Breast epithelium (tissue), 4 donors: ENCODE measurements at regions of chr7 and their contacts with region 1.

Region 1: GRCh38 chr7:84904561-84904960 is 282.3 kb downstream of the SEMA3D start:
- DNase-seq: no peak
- H3K4me3 ChIP-seq: no peak overlapping the region
- H3K27ac ChIP-seq: no peak overlapping the region
- H3K4me1 ChIP-seq: no peaks in the 10 kb centered on the region
- H3K27me3 ChIP-seq: no peaks in the 10 kb centered on the region
- CTCF ChIP-seq: no peak
- POLR2A ChIP-seq: no peak

Region 2: DNA sequence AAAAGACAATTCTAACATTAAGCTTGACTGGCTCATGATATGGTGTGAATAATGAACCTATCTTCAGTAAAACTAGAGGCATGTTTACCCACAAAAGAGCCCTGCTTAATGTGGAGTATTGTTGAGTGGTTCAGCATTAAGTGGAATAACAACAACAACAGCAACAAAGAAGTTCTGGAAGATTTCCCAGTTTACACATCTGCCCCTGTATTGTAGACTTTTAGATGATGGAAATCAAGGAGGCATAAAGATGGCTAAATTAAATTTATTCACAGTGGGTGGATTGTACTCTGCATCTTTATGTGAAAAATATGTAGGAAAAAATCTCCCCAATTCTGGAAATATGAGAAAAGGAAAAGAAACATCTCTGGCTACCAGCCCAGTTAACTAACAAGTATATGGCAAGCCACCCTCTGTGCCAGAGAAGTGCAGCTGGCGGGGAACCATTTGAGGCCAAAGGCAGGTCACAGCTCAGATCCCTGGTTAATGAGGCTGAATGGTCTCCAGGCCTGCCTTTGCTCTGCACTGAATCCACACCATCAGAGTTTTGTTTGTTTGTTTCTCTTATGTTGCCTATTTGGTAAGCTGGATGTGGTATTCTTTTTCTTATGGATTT is 96.3 kb after region 1 on chr7:
- intact Hi-C with region 1: no loop called
- DNase-seq: no peak
- H3K4me3 ChIP-seq: no peak overlapping the region
- H3K27ac ChIP-seq: no peak overlapping the region
- H3K4me1 ChIP-seq: no peaks in the 10 kb centered on the region
- H3K27me3 ChIP-seq: no peaks in the 10 kb centered on the region
- CTCF ChIP-seq: no peak
- POLR2A ChIP-seq: no peak

Region 3: GRCh38 chr7:86094166-86094669 is 1189.7 kb after region 1 on chr7:
- intact Hi-C with region 1: no loop called
- DNase-seq: no peak
- H3K4me3 ChIP-seq: no peak overlapping the region
- H3K27ac ChIP-seq: no peak overlapping the region
- H3K4me1 ChIP-seq: no peaks in the 10 kb centered on the region
- H3K27me3 ChIP-seq: no peaks in the 10 kb centered on the region
- CTCF ChIP-seq: no peak
- POLR2A ChIP-seq: no peak

Region 4: DNA sequence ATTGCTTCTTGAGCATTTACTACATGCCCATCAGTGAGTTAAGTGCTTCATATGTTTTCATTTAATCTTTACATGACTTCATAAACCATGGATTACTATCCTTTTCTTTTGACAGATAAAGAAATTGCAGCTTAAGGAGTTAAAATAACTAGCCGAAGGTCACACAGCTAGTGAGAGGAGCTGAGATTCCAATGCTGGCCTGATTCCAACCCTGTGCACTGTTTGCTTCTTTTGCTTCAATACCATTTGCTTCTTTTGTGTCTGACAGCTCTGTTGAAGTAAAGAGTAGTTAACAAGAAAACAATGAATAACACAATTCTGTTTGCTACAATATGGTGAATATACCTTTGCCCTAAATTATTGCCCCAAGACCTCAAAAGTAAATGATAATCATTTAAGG is 1871.6 kb after region 1 on chr7:
- intact Hi-C with region 1: loop called (anchors 10 kb)
- DNase-seq: no peak
- H3K4me3 ChIP-seq: no peak overlapping the region
- H3K27ac ChIP-seq: no peak overlapping the region
- H3K4me1 ChIP-seq: no peaks in the 10 kb centered on the region
- H3K27me3 ChIP-seq: no peaks in the 10 kb centered on the region
- CTCF ChIP-seq: no peak
- POLR2A ChIP-seq: no peak